Activated naive CD4-positive, alpha-beta T cell treated with anti-CD3 and anti-CD28 coated beads for 36 hours (primary cell): ENCODE measurements at regions of chr6 and their contacts with region 1.

Region 1: DNA sequence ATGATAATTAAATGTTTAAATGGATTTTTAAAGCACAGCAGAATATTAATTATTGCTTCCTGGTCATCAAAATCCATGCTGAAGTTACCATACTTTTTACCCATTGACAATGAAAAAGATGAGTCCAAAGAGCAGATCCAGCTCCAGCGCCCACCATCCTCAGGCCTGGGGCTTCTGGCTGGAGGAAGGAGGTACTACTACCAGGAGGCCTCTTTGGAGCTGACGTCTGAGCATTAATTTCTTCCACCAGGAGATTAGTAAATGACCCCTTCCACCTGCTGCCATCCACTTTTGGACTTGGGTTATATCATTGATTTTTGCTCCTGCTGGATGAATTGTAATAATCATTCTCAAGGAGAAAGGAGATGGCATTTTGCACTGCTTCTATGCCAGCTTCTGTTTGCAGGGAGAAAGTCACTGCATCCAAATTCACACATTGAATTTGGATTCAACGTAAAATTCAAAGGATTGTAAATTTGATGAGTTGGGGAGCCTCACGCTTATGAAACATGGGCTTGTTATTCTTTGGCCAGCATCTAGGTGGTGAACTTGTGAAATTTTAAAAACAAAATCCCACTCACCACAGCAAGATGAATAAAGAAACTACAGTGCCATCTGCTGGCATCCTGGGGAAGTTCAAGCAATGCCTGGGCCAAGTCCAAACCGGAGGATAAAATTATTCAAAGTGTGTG is 121.8 kb downstream of the SASH1 start:
- DNase-seq: peak; percentile 72
- H3K4me3 Mint-ChIP-seq: no peak overlapping the region
- H3K27ac Mint-ChIP-seq: no peak overlapping the region
- H3K4me1 Mint-ChIP-seq: no peaks in the 10 kb centered on the region
- H3K27me3 Mint-ChIP-seq: peaks cover 13% of the 10 kb centered on the region

Region 2: GRCh38 chr6:147999001-147999540 is 465.4 kb before region 1 on chr6:
- CTCF ChIA-PET with region 1: no interaction called
- intact Hi-C with region 1: no loop called
- DNase-seq: no peak
- H3K4me3 Mint-ChIP-seq: no peak overlapping the region
- H3K27ac Mint-ChIP-seq: no peak overlapping the region
- H3K4me1 Mint-ChIP-seq: no peaks in the 10 kb centered on the region
- H3K27me3 Mint-ChIP-seq: peaks cover 1% of the 10 kb centered on the region

Region 3: GRCh38 chr6:148223424-148223842 is 241.0 kb before region 1 on chr6:
- CTCF ChIA-PET with region 1: no interaction called
- intact Hi-C with region 1: no loop called
- DNase-seq: no peak
- H3K4me3 Mint-ChIP-seq: no peak overlapping the region
- H3K27ac Mint-ChIP-seq: no peak overlapping the region
- H3K4me1 Mint-ChIP-seq: no peaks in the 10 kb centered on the region
- H3K27me3 Mint-ChIP-seq: peaks cover 35% of the 10 kb centered on the region

Region 4: GRCh38 chr6:148250975-148251685 is 213.3 kb before region 1 on chr6:
- CTCF ChIA-PET with region 1: no interaction called
- intact Hi-C with region 1: loop called (anchors 2 kb)
- DNase-seq: no peak
- H3K4me3 Mint-ChIP-seq: no peak overlapping the region
- H3K27ac Mint-ChIP-seq: no peak overlapping the region
- H3K4me1 Mint-ChIP-seq: no peaks in the 10 kb centered on the region
- H3K27me3 Mint-ChIP-seq: peaks cover 7% of the 10 kb centered on the region

Region 5: GRCh38 chr6:148509800-148510581 is 45.5 kb after region 1 on chr6:
- CTCF ChIA-PET with region 1: no interaction called
- intact Hi-C with region 1: no loop called
- DNase-seq: no peak
- H3K4me3 Mint-ChIP-seq: no peak overlapping the region
- H3K27ac Mint-ChIP-seq: no peak overlapping the region
- H3K4me1 Mint-ChIP-seq: no peaks in the 10 kb centered on the region
- H3K27me3 Mint-ChIP-seq: peaks cover 21% of the 10 kb centered on the region

Region 6: DNA sequence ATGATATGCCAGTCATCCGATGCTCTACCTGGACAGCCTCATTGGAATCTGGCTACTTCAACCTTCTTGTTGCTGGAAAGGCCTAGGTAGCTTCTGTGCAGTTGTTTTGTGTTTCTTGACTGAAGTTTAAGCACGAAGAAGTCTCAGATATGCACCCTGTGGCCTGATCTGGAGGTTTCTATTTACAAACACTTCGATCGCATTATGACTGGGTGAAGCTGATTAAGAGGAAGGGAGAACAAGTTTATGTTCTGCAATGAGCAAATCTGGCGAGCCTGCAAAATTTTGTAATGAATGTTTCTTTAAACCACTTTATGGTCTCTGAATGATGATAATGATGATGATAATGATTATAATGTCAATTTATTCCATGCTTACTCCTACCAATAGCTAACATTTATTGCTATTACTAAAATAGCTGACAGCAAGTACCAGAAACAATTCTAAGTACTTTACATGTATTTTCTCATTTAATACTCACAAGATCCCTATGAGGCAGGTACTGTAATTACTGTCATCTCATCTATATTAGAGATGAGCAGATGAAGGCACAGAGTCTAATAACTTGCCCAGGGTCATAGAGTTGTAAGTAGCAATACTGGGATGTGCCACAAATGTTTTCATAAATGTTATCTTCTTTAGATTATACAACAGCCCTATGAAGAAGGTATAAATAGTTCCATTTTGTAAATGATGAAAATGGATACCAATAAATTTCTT is 156.3 kb after region 1 on chr6:
- CTCF ChIA-PET with region 1: no interaction called
- intact Hi-C with region 1: no loop called
- DNase-seq: no peak
- H3K4me3 Mint-ChIP-seq: no peak overlapping the region
- H3K27ac Mint-ChIP-seq: no peak overlapping the region
- H3K4me1 Mint-ChIP-seq: no peaks in the 10 kb centered on the region
- H3K27me3 Mint-ChIP-seq: peaks cover 8% of the 10 kb centered on the region